GM23248 (cell line): ENCODE measurements at regions of chr10 and their contacts with region 1.

Region 1: DNA sequence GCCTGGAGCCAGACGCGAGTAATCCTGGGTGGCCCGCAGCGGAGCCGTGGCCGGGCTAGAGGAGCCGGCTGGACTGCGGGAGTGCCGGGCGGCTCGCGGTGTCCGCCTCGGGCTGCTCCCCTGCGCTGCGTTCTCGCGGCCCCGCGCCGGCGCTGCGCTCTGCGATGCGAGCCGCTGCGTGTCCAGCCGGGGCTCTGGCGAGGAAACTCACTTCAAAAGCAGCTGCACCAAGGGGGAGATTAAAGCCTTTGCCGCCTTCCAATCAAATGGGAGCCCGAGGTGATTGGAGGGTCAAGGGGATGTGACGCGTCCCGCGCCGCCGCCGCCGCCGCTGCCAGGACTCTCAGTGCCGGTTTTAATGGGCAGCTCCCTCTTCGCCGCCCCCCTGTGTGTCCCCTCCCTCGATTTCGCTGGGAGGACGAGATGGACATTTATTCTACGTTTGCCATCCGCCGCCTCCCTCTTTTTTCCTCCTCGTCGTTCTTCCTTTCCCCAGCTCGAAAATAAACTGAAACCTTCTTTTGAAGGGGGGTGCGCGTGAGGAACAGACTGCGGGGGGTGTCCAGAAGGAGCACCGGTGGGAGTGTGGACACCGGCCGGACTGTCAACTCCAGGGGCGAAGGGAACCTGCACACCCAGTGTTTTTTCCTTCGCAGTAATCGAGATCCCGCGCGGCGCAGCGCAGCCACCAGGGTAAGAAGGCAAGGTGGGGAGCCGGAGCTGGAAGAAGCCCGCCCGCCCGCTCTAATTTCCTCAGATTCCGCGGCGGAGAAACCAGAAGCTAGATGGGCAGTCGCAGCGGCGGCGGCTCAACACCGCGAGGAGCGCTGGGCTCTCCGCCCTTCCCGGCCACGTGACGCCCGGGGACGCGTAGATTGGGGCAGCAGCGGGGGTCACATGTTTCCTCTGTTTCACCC is at the start of gene ZNF503:
- DNase-seq: peak; percentile 99
- H3K4me3 ChIP-seq: peak within 1 kb of the TSS; percentile 93
- H3K27ac ChIP-seq: peak within 1 kb of the TSS; percentile 92
- H3K4me1 ChIP-seq: no peaks in the 10 kb centered on the region
- H3K27me3 ChIP-seq: no peaks in the 10 kb centered on the region
- total RNA-seq, gene ZNF503: 16.1 and 17.5 TPM in 2 replicates

Region 2: DNA sequence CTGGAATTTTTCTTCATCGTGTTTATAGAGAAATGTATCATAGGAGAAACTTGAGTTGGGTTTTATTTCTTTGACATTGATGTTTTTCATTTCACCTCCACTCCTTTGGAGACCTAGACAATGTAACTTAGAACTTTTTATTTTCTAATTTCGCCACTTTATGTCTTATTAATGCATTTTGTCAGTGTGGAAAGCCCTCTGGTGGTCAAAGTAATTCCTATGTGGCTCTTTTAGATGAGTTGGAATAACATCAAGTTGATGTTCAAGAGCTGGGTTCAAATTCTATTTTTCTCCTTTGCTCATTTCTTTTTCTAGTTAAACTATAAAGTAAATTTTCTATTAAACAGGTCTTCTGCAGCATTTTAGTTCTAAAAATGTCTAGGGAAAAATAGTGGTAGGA is 508.2 kb after region 1 on chr10:
- in situ Hi-C with region 1: loop called (anchors 25 kb)
- DNase-seq: peak; percentile 65
- H3K4me3 ChIP-seq: no peak overlapping the region
- H3K27ac ChIP-seq: no peak overlapping the region
- H3K4me1 ChIP-seq: no peaks in the 10 kb centered on the region
- H3K27me3 ChIP-seq: peaks cover 19% of the 10 kb centered on the region

Region 3: GRCh38 chr10:76303682-76304316 is 902.0 kb after region 1 on chr10:
- in situ Hi-C with region 1: loop called (anchors 10 kb)
- DNase-seq: peak; percentile 89
- H3K4me3 ChIP-seq: no peak overlapping the region
- H3K27ac ChIP-seq: no peak overlapping the region
- H3K4me1 ChIP-seq: peaks cover 24% of the 10 kb centered on the region
- H3K27me3 ChIP-seq: no peaks in the 10 kb centered on the region

Region 4: GRCh38 chr10:76547352-76547972 is 1145.6 kb after region 1 on chr10:
- in situ Hi-C with region 1: loop called (anchors 10 kb)
- DNase-seq: peak; percentile 83
- H3K4me3 ChIP-seq: no peak overlapping the region
- H3K27ac ChIP-seq: no peak overlapping the region
- H3K4me1 ChIP-seq: peaks cover 10% of the 10 kb centered on the region
- H3K27me3 ChIP-seq: no peaks in the 10 kb centered on the region; the same call in 1 of the 2 replicates

Region 5: GRCh38 chr10:76984559-76985443 is 1583.0 kb after region 1 on chr10:
- in situ Hi-C with region 1: loop called (anchors 25 kb)
- DNase-seq: peak; percentile 85
- H3K4me3 ChIP-seq: no peak overlapping the region
- H3K27ac ChIP-seq: no peak overlapping the region
- H3K4me1 ChIP-seq: no peaks in the 10 kb centered on the region
- H3K27me3 ChIP-seq: no peaks in the 10 kb centered on the region

Region 6: DNA sequence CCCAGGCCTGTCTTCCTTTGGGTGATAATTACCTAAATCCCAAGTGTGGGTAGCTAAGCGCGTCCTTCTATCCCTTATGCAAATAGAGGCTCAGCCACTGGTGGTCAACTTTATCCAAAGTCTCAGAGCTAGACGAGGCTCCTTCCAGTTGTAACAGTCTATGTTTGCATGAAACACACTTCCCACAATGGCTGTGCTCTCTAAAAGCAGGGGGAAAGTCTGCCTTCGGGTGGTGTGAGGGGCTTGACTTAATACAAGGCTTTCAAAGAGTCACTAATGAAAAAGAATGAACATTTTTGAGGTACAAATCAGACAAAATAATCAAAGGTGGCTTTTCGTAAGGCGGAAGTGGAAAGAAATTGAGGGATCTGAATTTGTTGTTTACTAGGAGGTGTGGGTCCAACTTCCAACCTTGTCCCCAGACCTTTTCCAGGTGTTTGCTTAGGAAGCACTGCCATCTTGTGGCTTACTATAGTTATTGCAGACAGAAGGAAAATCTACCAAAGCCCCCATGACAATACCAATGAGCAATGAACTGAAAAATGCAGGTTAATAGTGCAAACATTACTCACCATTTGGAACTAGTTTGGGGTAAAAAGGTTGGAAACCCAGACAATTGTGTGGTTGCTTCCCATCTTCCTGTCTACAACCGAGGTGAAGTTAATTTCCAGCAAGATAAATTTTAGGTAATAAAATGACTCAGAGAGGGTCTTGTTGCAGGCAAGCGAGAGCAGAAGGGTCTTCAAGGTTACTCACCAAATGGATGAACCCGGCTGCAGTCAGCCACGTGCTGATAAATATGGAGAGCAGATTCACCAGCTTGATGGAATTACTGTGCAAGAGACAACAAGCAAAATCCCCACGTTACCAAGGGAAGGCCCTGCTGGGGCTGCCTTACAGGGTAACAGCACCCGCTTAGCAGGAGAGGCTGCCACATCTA is 1710.1 kb after region 1 on chr10:
- in situ Hi-C with region 1: loop called (anchors 25 kb)
- DNase-seq: peak; percentile 83
- H3K4me3 ChIP-seq: peak overlapping the region; percentile 16; the same call in 1 of the 2 replicates
- H3K27ac ChIP-seq: peak overlapping the region; percentile 52
- H3K4me1 ChIP-seq: peaks cover 13% of the 10 kb centered on the region
- H3K27me3 ChIP-seq: no peaks in the 10 kb centered on the region